Astrocyte of the cerebellum (primary cell): ENCODE measurements at regions of chr3 and their contacts with region 1.

Region 1: DNA sequence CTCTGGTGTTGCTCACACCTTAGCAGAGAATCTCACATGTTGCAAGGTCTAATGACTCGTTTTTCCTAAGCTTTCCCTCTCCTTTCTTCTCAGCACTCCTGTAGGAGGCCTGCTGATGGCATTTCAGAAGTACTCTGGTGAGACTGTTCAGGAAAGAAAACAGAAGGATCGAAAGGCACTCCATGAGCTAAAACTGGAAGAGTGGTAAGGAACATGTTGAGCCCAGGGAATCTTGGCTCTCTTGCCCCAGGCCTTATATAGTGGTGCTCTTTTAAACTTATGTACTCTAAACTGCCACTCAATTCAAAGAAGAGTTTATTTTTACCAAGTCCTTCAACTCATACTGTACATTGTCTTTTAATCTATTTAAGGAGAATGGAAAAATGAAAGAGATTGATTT is 18.8 kb downstream of the TIMMDC1 start:
- DNase-seq: no peak
- H3K4me3 ChIP-seq: no peak overlapping the region
- CTCF ChIP-seq: no peak

Region 2: DNA sequence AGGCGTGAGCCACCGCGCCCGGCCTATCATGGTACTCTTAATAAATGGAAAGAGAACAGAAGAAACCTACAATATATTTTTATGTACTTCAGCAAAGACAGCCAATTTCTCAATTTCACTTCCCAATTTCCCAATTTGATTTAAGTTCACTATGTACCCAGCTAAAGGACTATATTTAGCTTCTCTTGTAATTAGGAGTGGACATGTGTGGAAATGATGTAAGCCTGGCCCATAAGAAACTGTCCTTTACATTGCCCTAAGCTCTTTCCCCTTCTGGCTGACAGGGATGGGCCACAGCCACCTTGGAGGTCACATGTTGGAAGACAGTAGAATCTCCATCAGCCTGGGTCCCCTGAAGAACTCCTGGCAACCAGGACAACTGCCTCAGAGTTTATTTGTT is 59.9 kb before region 1 on chr3:
- in situ Hi-C with region 1: no loop called
- DNase-seq: no peak
- H3K4me3 ChIP-seq: no peak overlapping the region
- CTCF ChIP-seq: no peak

Region 3: GRCh38 chr3:119613201-119613600 is 96.1 kb after region 1 on chr3:
- in situ Hi-C with region 1: loop called (anchors 5 kb)
- DNase-seq: no peak
- H3K4me3 ChIP-seq: no peak overlapping the region
- CTCF ChIP-seq: no peak